ENCODE measurements at regions of chr1 and their contacts with region 1.

Region 1: DNA sequence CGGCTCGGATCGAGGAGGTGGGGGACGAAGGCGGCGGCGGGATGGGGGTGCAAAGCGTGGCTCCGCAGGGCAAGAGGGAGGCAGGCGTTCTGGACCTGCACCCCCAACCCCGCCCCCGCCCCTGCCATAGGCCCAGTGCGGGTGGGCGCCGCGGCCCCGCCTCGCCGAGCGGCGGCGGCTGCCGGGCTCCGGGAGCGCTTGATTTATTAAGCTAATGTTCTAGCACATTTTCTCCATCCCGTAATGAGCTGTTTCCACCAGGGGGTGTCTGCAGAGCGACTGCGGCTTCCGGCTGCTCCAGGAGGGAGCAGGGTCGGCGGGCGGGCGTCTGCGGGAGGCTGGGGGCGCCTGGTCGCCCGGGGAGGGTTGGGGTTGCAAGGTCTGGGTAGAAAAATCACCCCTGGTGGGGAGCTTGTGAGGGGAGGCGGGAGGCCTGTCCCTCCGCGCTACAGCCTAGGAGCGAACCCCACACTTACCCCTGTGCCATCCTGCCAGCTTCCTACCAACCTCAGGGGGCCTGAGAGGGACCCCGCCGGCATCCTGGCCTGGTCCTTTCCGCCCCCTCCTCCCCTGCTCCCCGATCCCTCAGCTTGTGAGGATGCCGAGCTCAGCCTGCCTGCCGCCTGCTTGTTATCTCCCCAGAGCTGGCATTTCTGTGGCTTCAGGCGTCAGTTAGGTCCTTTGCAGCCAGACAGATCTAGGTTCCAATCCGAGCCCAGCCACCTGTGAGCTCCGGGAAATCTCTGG is 48.5 kb upstream of the ACOT11 start:
- DNase-seq: no peak
- H3K4me3 ChIP-seq: peak overlapping the region; percentile 42
- CTCF ChIP-seq: peak; percentile 54

Region 2: GRCh38 chr1:54810100-54810942 is 310.8 kb after region 1 on chr1:
- CTCF ChIA-PET with region 1: interaction called, 22 read pairs
- POLR2A ChIA-PET with region 1: no interaction called
- DNase-seq: no peak
- H3K4me3 ChIP-seq: no peak overlapping the region
- CTCF ChIP-seq: peak; percentile 92